ENCODE measurements at regions of chr6 and their contacts with region 1.

Region 1: GRCh38 chr6:151335930-151336329 is 55.4 kb downstream of the ZBTB2 start:
- DNase-seq: no peak
- ATAC-seq: no peak
- H3K4me3 ChIP-seq: no peak overlapping the region
- H3K27ac ChIP-seq: no peak overlapping the region
- H3K4me1 ChIP-seq: peaks cover 6% of the 10 kb centered on the region; the same call in 1 of the 2 replicates
- H3K27me3 ChIP-seq: no peaks in the 10 kb centered on the region
- CTCF ChIP-seq: no peak
- EP300 ChIP-seq: no peak
- POLR2A ChIP-seq: no peak
- RAD21 ChIP-seq: no peak

Region 2: GRCh38 chr6:150891888-150892485 is 443.9 kb before region 1 on chr6:
- CTCF ChIA-PET with region 1: interaction called, 38 read pairs
- POLR2A ChIA-PET with region 1: interaction called, 8 read pairs
- in situ Hi-C with region 1: no loop called
- intact Hi-C with region 1: loop called (anchors 1 kb)
- DNase-seq: peak; percentile 69
- ATAC-seq: peak; percentile 86
- H3K4me3 ChIP-seq: no peak overlapping the region
- H3K27ac ChIP-seq: no peak overlapping the region
- H3K4me1 ChIP-seq: no peaks in the 10 kb centered on the region
- H3K27me3 ChIP-seq: no peaks in the 10 kb centered on the region
- CTCF ChIP-seq: peak; percentile 92
- EP300 ChIP-seq: no peak
- POLR2A ChIP-seq: no peak
- RAD21 ChIP-seq: peak; percentile 76